ENCODE measurements at regions of chr2 and their contacts with region 1.

Region 1: GRCh38 chr2:199973703-199974102 is 18.3 kb downstream of the MAIP1 start:
- DNase-seq: no peak
- ATAC-seq: peak; percentile 84
- H3K4me3 Mint-ChIP-seq: no peak overlapping the region
- H3K27ac Mint-ChIP-seq: no peak overlapping the region
- H3K4me1 Mint-ChIP-seq: peaks cover 8% of the 10 kb centered on the region
- H3K27me3 Mint-ChIP-seq: no peaks in the 10 kb centered on the region
- CTCF ChIP-seq: peak; percentile 31; the same call in 1 of the 2 replicates

Region 2: GRCh38 chr2:199922856-199923255 is 50.8 kb before region 1 on chr2:
- CTCF ChIA-PET with region 1: no interaction called
- POLR2A ChIA-PET with region 1: no interaction called
- DNase-seq: no peak
- ATAC-seq: peak; percentile 46
- H3K4me3 Mint-ChIP-seq: no peak overlapping the region
- H3K27ac Mint-ChIP-seq: peak overlapping the region; percentile 79; the same call in 1 of the 2 replicates
- H3K4me1 Mint-ChIP-seq: peaks cover 26% of the 10 kb centered on the region
- H3K27me3 Mint-ChIP-seq: no peaks in the 10 kb centered on the region
- CTCF ChIP-seq: no peak

Region 3: DNA sequence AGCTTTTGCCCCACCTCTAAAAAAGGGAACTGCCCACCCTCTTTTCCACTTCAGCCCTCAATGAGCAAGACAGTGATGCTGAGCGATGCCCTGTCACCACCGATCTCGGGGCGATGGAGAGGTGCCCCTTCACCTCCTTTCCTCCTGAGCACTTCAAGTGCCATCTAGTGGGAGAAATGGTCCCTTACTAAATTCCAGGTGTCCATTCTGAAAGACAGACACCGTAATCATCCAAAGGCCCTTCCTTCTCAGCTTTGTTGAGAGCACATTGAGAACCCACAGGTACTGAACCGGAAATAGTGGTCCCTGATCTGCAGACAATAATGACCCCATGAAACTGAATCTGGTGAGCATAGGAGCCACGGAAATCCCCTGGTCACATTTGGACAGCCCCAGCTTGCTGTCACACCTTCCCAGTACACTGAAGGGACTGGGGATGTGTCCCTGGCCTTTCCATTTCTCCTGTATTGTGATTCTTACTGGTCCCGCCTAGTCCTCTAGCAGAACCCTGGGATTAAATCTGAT is 497.7 kb after region 1 on chr2:
- CTCF ChIA-PET with region 1: interaction called, 10 read pairs
- POLR2A ChIA-PET with region 1: no interaction called
- DNase-seq: no peak
- ATAC-seq: peak; percentile 69
- H3K4me3 Mint-ChIP-seq: no peak overlapping the region
- H3K27ac Mint-ChIP-seq: peak overlapping the region; percentile 55; the same call in 1 of the 2 replicates
- H3K4me1 Mint-ChIP-seq: peaks cover 31% of the 10 kb centered on the region
- H3K27me3 Mint-ChIP-seq: no peaks in the 10 kb centered on the region
- CTCF ChIP-seq: no peak

Measured in WTC11 (cell line).